ENCODE measurements at regions of chr21 and their contacts with region 1.

Region 1: GRCh38 chr21:27590271-27590670 is 623.4 kb upstream of the ADAMTS5 start:
- DNase-seq: no peak
- ATAC-seq: no peak
- H3K4me3 ChIP-seq: no peak overlapping the region
- H3K4me3 Mint-ChIP-seq: no peak overlapping the region
- H3K27ac ChIP-seq: no peak overlapping the region
- H3K27ac Mint-ChIP-seq: no peak overlapping the region
- H3K4me1 ChIP-seq: no peaks in the 10 kb centered on the region
- H3K4me1 Mint-ChIP-seq: no peaks in the 10 kb centered on the region
- H3K27me3 ChIP-seq: no peaks in the 10 kb centered on the region
- H3K27me3 Mint-ChIP-seq: no peaks in the 10 kb centered on the region
- CTCF ChIP-seq: no peak

Region 2: DNA sequence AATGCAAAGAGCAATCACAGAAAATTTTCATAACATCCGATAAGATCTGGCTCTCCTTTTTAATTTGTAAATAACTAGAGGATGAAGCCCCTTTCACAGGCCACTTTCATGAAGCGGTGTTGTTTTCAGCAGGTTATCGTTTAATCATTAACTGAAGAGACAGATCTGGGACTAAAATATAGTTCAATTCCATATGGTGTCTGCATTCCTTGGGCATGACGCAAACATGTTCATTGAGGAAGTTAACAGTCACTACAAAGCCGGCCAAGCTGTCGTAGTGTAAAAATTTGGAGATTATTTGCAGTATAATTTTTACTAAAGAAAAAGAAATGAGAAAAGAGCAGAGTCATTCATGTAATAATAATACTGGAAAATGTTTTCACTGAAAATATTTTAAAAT is 58.2 kb before region 1 on chr21:
- CTCF ChIA-PET with region 1: no interaction called
- POLR2A ChIA-PET with region 1: no interaction called
- intact Hi-C with region 1: loop called in 1 of 2 experiments (anchors 10 kb)
- DNase-seq: no peak
- ATAC-seq: no peak
- H3K4me3 ChIP-seq: no peak overlapping the region
- H3K4me3 Mint-ChIP-seq: no peak overlapping the region
- H3K27ac ChIP-seq: no peak overlapping the region
- H3K27ac Mint-ChIP-seq: no peak overlapping the region
- H3K4me1 ChIP-seq: no peaks in the 10 kb centered on the region
- H3K4me1 Mint-ChIP-seq: no peaks in the 10 kb centered on the region
- H3K27me3 ChIP-seq: no peaks in the 10 kb centered on the region
- H3K27me3 Mint-ChIP-seq: no peaks in the 10 kb centered on the region
- CTCF ChIP-seq: no peak

Region 3: DNA sequence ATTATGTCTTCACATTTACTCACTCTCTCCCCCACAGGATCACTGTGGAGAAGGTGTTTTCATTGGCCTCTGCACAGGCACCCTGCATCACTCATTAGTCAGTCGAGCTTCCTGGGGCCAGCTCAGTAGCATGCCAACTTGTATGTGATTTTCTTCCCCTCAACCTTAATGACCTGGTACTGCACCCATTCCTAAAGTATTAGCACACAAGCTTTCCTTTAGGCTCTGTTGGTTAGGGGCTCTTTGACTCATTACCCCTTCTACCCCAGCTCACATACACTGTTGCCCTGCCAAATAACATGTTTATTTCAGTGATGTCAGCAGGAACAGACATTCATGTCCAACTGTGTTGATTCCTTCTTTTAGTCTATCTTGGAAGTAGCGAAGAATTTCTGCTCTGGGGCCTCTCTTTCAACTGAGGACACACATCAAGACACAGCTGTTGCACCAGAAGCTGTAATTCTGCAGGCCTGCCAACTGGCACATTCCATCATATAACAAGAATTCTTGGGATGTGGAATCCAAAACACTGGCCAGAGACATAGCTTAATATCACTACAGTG is 19.9 kb before region 1 on chr21:
- CTCF ChIA-PET with region 1: no interaction called
- POLR2A ChIA-PET with region 1: no interaction called
- intact Hi-C with region 1: no loop called
- DNase-seq: no peak
- ATAC-seq: no peak
- H3K4me3 ChIP-seq: no peak overlapping the region
- H3K4me3 Mint-ChIP-seq: no peak overlapping the region
- H3K27ac ChIP-seq: no peak overlapping the region
- H3K27ac Mint-ChIP-seq: no peak overlapping the region
- H3K4me1 ChIP-seq: no peaks in the 10 kb centered on the region
- H3K4me1 Mint-ChIP-seq: no peaks in the 10 kb centered on the region
- H3K27me3 ChIP-seq: no peaks in the 10 kb centered on the region
- H3K27me3 Mint-ChIP-seq: no peaks in the 10 kb centered on the region
- CTCF ChIP-seq: no peak

Region 4: GRCh38 chr21:27648560-27648959 is 58.3 kb after region 1 on chr21:
- CTCF ChIA-PET with region 1: no interaction called
- POLR2A ChIA-PET with region 1: no interaction called
- intact Hi-C with region 1: no loop called
- DNase-seq: no peak
- ATAC-seq: no peak
- H3K4me3 ChIP-seq: no peak overlapping the region
- H3K4me3 Mint-ChIP-seq: no peak overlapping the region
- H3K27ac ChIP-seq: no peak overlapping the region
- H3K27ac Mint-ChIP-seq: no peak overlapping the region
- H3K4me1 ChIP-seq: no peaks in the 10 kb centered on the region
- H3K4me1 Mint-ChIP-seq: no peaks in the 10 kb centered on the region
- H3K27me3 ChIP-seq: no peaks in the 10 kb centered on the region
- H3K27me3 Mint-ChIP-seq: no peaks in the 10 kb centered on the region
- CTCF ChIP-seq: no peak

Region 5: DNA sequence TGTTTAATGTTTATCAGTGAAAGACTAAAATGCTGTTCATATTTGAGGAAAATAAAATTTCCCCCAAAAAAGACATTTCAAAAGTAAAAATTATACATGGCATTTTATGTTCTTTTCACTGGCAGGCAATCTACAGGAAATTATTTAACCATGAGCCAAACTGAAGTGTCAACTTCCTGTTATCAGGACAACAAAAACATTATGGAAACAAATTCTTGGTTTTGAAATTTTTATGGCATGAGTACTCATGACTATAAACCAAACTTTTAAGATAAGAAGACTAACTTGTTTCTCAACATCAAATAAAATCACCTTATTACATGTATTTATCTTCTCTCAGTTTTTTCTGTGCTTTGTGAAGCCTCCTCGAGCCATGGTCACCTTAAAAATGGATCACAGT is 703.8 kb after region 1 on chr21:
- CTCF ChIA-PET with region 1: no interaction called
- POLR2A ChIA-PET with region 1: no interaction called
- intact Hi-C with region 1: no loop called
- DNase-seq: no peak
- ATAC-seq: no peak
- H3K4me3 ChIP-seq: no peak overlapping the region
- H3K4me3 Mint-ChIP-seq: no peak overlapping the region
- H3K27ac ChIP-seq: no peak overlapping the region
- H3K27ac Mint-ChIP-seq: no peak overlapping the region
- H3K4me1 ChIP-seq: no peaks in the 10 kb centered on the region
- H3K4me1 Mint-ChIP-seq: no peaks in the 10 kb centered on the region
- H3K27me3 ChIP-seq: no peaks in the 10 kb centered on the region
- H3K27me3 Mint-ChIP-seq: no peaks in the 10 kb centered on the region
- CTCF ChIP-seq: no peak